ENCODE measurements at regions of chr11 and their contacts with region 1.

Region 1: DNA sequence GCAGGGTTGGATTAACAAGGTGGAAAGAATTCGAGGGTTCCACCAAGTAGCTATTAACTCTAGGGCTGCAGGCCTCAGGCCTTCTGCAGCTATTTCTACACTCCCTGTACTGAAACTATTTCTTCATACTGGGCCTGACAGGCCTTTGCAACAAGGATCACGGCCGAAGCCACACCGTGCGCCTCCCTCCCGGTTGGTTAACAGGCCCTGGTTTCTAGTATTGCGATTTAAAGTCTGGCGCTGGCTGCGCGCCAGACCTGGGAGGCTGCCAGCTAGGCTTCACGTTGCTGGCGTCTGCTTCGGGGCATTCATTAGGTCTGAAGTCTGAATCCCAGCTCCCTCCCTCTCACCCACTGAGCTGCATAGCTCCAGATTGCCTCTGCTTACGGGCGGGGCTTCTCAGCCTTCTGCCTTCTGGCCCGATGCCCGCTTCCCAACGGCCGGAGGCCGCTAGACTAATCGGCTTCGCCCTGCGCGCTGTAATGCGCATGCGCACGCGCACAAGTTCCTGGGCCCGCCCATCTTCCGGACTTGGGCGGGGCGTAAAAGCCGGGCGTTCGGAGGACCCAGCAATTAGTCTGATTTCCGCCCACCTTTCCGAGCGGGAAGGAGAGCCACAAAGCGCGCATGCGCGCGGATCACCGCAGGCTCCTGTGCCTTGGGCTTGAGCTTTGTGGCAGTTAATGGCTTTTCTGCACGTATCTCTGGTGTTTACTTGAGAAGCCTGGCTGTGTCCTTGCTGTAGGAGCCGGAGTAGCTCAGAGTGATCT is 1.6 kb downstream of the LDHA start:
- DNase-seq: peak; percentile 95
- H3K4me3 Mint-ChIP-seq: peak overlapping the region; percentile 99
- H3K27ac Mint-ChIP-seq: peak overlapping the region; percentile 98
- H3K4me1 Mint-ChIP-seq: peaks cover 59% of the 10 kb centered on the region
- H3K27me3 Mint-ChIP-seq: no peaks in the 10 kb centered on the region

Region 2: GRCh38 chr11:18243783-18244362 is 152.0 kb before region 1 on chr11:
- CTCF ChIA-PET with region 1: interaction called, 10 read pairs
- POLR2A ChIA-PET with region 1: interaction called, 5 read pairs
- DNase-seq: peak; percentile 87
- H3K4me3 Mint-ChIP-seq: no peak overlapping the region
- H3K27ac Mint-ChIP-seq: peak overlapping the region; percentile 36
- H3K4me1 Mint-ChIP-seq: peaks cover 31% of the 10 kb centered on the region
- H3K27me3 Mint-ChIP-seq: peaks cover 26% of the 10 kb centered on the region

Region 3: DNA sequence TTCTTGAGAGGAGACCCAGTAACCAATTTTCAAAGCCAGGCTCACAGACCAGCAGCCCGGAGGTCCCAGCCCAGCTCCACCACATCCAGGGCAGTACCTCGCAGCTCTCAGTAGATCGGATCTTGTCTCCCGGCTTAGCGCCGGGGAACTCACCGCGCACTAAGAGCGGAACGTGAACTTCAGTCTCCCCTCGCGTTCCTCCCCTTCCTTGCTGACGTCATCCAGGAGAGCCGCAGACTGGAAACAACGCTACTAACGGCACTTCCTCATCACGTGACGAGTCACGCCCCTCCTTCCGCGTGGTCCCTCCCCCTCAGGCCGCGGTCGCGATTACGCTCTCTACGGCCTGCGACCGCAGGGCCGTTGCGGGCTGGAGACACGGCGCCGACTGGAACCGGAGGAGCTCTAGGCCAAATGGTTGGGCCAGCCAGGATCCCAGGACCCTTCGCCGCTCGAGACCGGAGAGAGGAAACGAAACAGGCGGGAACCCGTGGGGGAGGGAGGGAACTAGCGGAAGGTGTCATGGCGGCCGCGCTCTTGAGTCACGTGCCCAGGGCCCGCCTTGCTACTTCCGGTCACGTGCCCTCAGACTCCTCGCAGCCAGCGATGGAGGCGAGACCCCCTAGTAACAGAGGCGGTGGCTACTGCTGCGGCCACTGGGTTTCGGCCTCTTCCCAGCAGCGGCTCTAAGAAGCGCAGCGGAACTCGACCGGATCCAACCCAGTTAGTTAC is 73.8 kb before region 1 on chr11 and contains the starts of genes GTF2H1 and HPS5:
- CTCF ChIA-PET with region 1: interaction called, 3 read pairs
- POLR2A ChIA-PET with region 1: interaction called, 17 read pairs
- DNase-seq: peak; percentile 98
- H3K4me3 Mint-ChIP-seq: peak within 1 kb of the TSS; percentile 86
- H3K27ac Mint-ChIP-seq: peak within 1 kb of the TSS; percentile 99
- H3K4me1 Mint-ChIP-seq: peaks cover 68% of the 10 kb centered on the region
- H3K27me3 Mint-ChIP-seq: no peaks in the 10 kb centered on the region
- total RNA-seq, gene GTF2H1: 50.6 to 57.6 TPM
- total RNA-seq, gene HPS5: 17.6 TPM

Region 4: DNA sequence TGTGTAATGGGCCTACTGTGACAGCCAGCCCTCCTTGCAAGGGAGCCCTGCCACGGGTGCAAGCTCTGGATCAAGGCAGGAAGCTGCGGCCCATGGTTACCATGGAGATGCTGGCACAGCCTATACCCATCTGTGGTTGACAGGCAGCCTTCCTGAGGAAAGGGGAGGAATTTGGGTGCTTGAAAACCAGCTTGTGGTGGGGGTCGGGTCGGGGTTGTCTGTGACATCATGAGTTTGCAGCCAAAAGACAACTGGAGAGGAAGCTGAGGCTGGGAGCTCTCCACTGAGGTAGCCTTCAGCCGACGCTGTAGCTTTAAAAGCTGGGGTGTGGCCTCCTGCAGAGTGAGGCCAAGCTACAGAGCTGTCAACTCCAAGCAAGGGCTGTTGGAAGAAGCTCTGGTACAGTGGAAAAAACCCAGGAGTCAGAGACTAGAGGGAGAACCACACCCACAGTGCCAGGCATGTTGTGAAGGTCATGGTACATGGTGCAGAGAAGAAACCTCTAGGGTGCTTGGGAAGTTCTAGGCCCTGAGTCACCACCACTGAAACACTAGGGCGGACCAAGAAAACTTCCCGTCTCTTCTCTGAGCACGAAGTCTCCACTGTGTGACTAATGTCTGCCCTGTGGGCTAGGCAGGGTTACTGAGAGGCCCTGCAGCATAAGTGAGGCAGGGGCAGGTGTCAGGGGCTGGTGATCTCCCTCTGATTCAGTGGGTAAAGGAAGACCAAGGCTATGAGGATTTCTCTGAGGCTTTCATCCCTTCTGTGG is 12.3 kb before region 1 on chr11:
- CTCF ChIA-PET with region 1: interaction called, 8 read pairs
- POLR2A ChIA-PET with region 1: interaction called, 35 read pairs
- DNase-seq: peak; percentile 84
- H3K4me3 Mint-ChIP-seq: peak overlapping the region; percentile 70
- H3K27ac Mint-ChIP-seq: peak overlapping the region; percentile 99
- H3K4me1 Mint-ChIP-seq: peaks cover 48% of the 10 kb centered on the region
- H3K27me3 Mint-ChIP-seq: no peaks in the 10 kb centered on the region

Measured in activated CD4-positive, alpha-beta T cell treated with anti-CD3 and anti-CD28 coated beads, Interleukin-2, amount 10 ng/mL, durations not matched to agents 7 days and 5 days (primary cell).